Right ventricle myocardium inferior (tissue), 1 donor: ENCODE measurements at regions of chr5 and their contacts with region 1.

Region 1: DNA sequence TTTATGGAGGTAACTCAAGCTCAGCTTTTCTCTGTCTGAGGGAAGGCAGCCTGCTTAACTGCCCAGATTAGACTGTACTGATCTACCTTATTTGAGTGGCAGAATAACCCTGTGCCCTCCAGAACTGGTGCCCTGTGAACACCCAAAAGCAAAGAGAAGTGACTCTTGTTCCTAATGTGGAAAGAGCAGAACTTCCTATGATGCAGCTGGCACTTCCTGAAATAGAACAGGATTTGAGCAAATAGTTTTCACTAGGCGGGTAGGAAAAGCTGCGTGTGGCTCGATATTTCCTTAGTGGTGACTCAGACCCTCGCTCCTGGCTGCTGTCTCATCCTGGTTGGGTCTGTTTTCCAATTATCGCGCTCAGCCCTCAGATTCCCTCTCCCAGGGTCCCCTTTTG is 89.9 kb downstream of the SH3TC2 start:
- DNase-seq: no peak
- ATAC-seq: peak; percentile 12

Region 2: DNA sequence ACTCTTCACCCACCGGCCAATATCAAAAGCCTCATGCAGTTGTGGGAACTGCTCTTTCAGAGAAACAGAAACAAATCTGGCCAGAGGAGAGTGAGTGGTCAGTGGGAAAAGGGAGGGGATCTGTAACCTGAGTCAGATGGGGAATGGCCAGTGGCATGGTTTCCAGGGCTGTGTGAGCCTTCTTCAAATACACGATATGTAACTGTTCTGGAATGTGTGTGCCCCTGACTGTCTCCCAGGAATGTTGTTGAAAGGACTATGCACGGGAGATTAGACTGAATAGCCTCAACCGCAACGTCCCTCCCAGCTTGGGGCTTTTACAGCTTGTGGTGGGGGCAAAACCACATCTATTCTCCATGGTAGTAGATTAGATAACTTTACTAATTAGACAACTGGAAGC is 29.1 kb after region 1 on chr5:
- intact Hi-C with region 1: loop called (anchors 2 kb)
- DNase-seq: no peak
- ATAC-seq: peak; percentile 55

Region 3: GRCh38 chr5:149429839-149430721 is 457.1 kb after region 1 on chr5:
- intact Hi-C with region 1: no loop called
- DNase-seq: peak; percentile 78
- ATAC-seq: peak; percentile 3